Tibial artery (tissue), 4 donors: ENCODE measurements at regions of chr1 and their contacts with region 1.

Region 1: DNA sequence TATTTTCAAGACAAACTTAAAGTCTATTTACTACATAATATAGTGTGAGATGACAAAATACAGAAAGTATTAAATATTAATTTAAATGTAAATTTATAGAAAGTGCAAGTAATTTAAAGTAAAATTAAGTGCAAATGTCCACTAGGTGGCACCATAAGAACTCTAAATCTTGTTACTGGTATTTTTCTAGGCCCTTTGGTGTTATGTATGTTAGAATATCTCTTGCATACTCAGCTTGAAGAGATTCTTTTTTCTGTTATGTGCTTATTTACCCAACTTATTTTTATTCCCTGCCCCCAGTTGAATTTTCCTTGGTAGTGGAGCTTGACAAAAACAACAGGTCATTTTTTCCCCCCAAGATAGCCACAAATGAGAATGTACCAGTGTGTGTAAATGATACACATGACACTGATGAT is 71.5 kb downstream of the RPS6KC1 start:
- DNase-seq: no peak
- H3K4me3 ChIP-seq: no peak overlapping the region
- H3K27ac ChIP-seq: no peak overlapping the region
- H3K4me1 ChIP-seq: peaks cover 0 to 12% (median 0%) of the 10 kb centered on the region in 4 donors
- H3K27me3 ChIP-seq: no peaks in the 10 kb centered on the region
- CTCF ChIP-seq: peak; percentile 49 to 50

Region 2: DNA sequence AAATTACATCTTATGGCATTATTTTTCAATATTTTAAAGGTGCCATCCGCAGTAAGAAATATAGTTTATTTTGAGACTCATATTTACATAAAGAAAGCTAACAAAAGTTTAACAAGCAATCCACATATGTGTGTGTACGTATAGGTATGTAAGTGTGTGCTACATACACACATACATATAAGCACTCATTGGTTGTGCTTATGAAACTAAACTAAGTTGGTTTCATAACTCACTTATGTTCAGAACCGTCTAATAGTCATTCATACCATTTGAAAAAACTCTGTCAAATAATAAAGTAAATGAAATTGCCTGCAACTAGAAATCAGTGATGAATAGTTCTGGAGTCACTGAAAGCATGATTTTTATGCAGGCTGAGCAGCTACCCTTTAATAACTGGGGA is 316.8 kb before region 1 on chr1:
- intact Hi-C with region 1: no loop called
- DNase-seq: no peak
- H3K4me3 ChIP-seq: no peak overlapping the region
- H3K27ac ChIP-seq: no peak overlapping the region
- H3K4me1 ChIP-seq: no peaks in the 10 kb centered on the region
- H3K27me3 ChIP-seq: no peaks in the 10 kb centered on the region
- CTCF ChIP-seq: no peak

Region 3: GRCh38 chr1:214123061-214123784 is 1000.7 kb after region 1 on chr1:
- intact Hi-C with region 1: loop called (anchors 10 kb)
- DNase-seq: peak in 1 of 2 donors; percentile 24
- H3K4me3 ChIP-seq: no peak overlapping the region
- H3K27ac ChIP-seq: no peak overlapping the region
- H3K4me1 ChIP-seq: no peaks in the 10 kb centered on the region
- H3K27me3 ChIP-seq: no peaks in the 10 kb centered on the region
- CTCF ChIP-seq: peak; percentile 35 to 38